ENCODE measurements at regions of chr14 and their contacts with region 1.

Region 1: GRCh38 chr14:76352639-76353281 is 23.2 kb upstream of the ESRRB start:
- DNase-seq: peak; percentile 76
- H3K4me3 Mint-ChIP-seq: peak overlapping the region; percentile 64
- H3K27ac Mint-ChIP-seq: no peak overlapping the region
- H3K4me1 Mint-ChIP-seq: no peaks in the 10 kb centered on the region
- H3K27me3 Mint-ChIP-seq: peaks cover 71% of the 10 kb centered on the region
- CTCF ChIP-seq: peak; percentile 76

Region 2: GRCh38 chr14:76050797-76051392 is 301.9 kb before region 1 on chr14:
- CTCF ChIA-PET with region 1: interaction called, 5 read pairs
- intact Hi-C with region 1: loop called (anchors 1 kb)
- DNase-seq: peak; percentile 58
- H3K4me3 Mint-ChIP-seq: no peak overlapping the region
- H3K27ac Mint-ChIP-seq: no peak overlapping the region
- H3K4me1 Mint-ChIP-seq: no peaks in the 10 kb centered on the region
- H3K27me3 Mint-ChIP-seq: no peaks in the 10 kb centered on the region
- CTCF ChIP-seq: peak; percentile 59

Region 3: DNA sequence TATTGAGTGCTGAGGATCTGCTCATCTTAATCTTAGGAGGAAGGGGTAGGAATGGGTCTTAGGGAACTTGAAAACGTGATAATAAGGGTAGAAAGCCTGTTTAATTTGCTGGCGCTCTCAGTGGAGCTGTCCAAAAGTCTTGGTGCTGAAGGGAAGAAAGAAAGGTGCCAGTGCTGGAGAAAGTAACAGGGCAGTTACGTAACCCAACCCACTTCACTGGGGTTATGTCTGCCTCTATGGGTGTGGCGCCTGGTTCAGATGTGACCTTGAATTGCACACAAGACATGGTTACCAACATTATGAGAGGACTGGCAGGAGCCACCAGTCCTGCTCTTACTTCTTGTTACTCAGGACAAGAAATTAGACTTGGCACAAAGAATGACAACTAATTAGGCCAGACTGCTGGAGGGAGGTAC is 219.7 kb before region 1 on chr14:
- CTCF ChIA-PET with region 1: no interaction called
- intact Hi-C with region 1: no loop called
- DNase-seq: peak; percentile 19
- H3K4me3 Mint-ChIP-seq: no peak overlapping the region
- H3K27ac Mint-ChIP-seq: no peak overlapping the region
- H3K4me1 Mint-ChIP-seq: no peaks in the 10 kb centered on the region
- H3K27me3 Mint-ChIP-seq: peaks cover 100% of the 10 kb centered on the region
- CTCF ChIP-seq: no peak

Region 4: GRCh38 chr14:76203086-76204001 is 149.4 kb before region 1 on chr14:
- CTCF ChIA-PET with region 1: no interaction called
- intact Hi-C with region 1: loop called (anchors 5 kb)
- DNase-seq: peak; percentile 63
- H3K4me3 Mint-ChIP-seq: peak overlapping the region; percentile 19
- H3K27ac Mint-ChIP-seq: peak overlapping the region; percentile 83
- H3K4me1 Mint-ChIP-seq: peaks cover 12% of the 10 kb centered on the region
- H3K27me3 Mint-ChIP-seq: no peaks in the 10 kb centered on the region
- CTCF ChIP-seq: no peak